Activated naive CD4-positive, alpha-beta T cell treated with anti-CD3 and anti-CD28 coated beads for 36 hours (primary cell): ENCODE measurements at regions of chr6 and their contacts with region 1.

Region 1: DNA sequence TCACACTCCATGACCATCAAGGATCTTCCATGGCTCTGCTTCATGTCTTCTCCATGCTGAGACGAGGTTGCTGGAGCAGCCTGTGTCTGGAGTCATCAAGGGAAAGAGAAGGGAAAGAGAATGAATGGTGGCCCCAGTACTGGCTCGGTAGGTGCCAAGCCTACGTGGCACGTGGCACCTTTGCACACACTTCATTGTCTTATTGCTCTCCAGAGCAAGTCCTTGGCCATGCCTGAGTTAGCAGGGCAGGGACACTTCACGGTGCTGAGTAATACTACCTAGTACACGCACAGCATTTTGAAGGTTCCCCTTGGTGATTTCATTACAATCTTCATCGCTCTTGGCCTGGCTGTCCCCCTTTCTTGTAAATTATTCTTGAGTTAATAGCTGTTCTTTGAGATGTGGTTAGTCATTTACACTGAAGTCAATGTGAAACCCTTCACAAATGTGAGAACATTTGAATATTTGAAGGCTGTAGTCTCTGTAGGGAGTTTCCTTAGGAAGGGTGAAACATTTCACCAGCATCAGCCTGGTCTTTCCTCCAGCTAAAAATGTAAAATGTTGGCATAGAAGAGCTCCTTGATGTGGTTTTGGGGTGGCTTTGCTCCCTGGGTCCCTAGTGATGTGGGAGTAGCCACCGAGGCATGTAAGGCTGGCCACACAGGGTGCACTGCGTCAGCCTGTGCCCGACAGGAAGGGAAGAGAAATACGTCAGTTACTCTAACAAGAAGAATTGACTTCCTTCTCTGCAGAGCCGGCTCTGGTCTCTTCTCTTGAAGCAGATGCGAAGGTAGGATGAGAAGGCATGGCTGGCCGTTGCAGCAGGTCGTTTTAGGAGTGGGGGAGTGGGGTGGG is at the start of gene SYTL3:
- DNase-seq: peak; percentile 95
- H3K4me3 Mint-ChIP-seq: peak within 1 kb of the TSS; percentile 76
- H3K27ac Mint-ChIP-seq: peak within 1 kb of the TSS; percentile 98
- H3K4me1 Mint-ChIP-seq: peaks cover 72% of the 10 kb centered on the region
- H3K27me3 Mint-ChIP-seq: no peaks in the 10 kb centered on the region
- total RNA-seq, gene SYTL3: 115 to 120 TPM

Region 2: GRCh38 chr6:157823528-157824370 is 825.8 kb before region 1 on chr6:
- CTCF ChIA-PET with region 1: no interaction called
- intact Hi-C with region 1: loop called (anchors 2 kb)
- DNase-seq: peak; percentile 96
- H3K4me3 Mint-ChIP-seq: peak overlapping the region; percentile 80
- H3K27ac Mint-ChIP-seq: peak overlapping the region; percentile 96
- H3K4me1 Mint-ChIP-seq: peaks cover 42% of the 10 kb centered on the region
- H3K27me3 Mint-ChIP-seq: peaks cover 4% of the 10 kb centered on the region

Region 3: DNA sequence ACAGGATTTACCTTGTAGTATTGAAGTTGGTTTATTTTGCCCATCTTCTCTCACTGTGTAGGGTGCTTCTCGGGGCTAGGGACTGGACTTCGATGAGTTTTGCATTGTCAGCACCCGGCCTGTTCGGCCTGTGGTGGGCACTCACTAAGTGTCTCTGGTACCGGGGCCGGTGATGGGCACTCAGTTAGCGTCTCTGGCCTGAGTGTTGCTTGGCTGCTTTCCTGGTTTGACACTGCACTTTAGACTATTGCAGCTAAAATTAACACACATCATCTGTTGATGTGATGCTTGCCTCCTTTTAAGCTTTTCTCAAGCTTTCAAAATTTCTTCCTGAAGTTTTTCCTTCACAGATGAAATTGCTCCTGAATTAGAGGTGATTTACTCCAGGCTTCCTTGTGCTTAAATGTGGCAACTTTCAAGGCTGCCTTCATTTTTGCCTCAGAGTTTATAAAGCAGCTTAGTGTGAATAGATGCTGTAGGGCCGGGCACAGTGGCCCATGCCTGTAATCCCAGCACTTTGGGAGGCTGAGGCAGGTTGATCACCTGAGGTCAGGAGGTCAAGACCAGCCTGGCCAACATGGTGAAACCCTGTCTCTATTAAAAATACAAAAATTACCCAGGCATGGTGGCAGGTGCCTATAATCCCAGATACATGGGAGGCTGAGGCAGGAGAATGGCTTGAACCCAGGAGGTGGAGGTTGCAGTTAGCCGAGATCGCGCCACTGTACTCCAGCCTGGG is 379.0 kb before region 1 on chr6:
- CTCF ChIA-PET with region 1: no interaction called
- intact Hi-C with region 1: loop called (anchors 2 kb)
- DNase-seq: peak; percentile 50
- H3K4me3 Mint-ChIP-seq: peak overlapping the region; percentile 32
- H3K27ac Mint-ChIP-seq: no peak overlapping the region
- H3K4me1 Mint-ChIP-seq: peaks cover 30% of the 10 kb centered on the region
- H3K27me3 Mint-ChIP-seq: no peaks in the 10 kb centered on the region

Region 4: DNA sequence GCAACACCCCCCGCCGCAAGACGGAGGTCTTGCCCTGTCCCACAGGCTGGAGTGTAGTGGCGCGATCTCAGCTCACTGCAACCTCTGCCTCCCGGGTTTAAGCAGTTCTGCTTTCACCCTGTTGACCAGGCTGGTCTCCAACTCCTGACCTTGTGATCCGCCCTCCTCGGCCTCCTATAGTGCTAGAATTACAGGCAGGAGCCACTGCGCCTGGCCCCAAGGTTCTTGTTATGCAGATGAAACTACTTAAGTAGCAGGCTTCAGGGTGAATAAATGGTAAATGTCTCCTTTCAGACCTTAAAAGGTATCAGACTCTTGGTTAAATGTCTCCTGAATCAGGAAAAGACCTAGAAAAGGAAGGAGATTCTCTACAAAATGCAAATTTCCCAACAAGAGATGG is 185.0 kb before region 1 on chr6:
- CTCF ChIA-PET with region 1: no interaction called
- intact Hi-C with region 1: no loop called
- DNase-seq: no peak
- H3K4me3 Mint-ChIP-seq: no peak overlapping the region
- H3K27ac Mint-ChIP-seq: no peak overlapping the region
- H3K4me1 Mint-ChIP-seq: peaks cover 3% of the 10 kb centered on the region
- H3K27me3 Mint-ChIP-seq: no peaks in the 10 kb centered on the region

Region 5: DNA sequence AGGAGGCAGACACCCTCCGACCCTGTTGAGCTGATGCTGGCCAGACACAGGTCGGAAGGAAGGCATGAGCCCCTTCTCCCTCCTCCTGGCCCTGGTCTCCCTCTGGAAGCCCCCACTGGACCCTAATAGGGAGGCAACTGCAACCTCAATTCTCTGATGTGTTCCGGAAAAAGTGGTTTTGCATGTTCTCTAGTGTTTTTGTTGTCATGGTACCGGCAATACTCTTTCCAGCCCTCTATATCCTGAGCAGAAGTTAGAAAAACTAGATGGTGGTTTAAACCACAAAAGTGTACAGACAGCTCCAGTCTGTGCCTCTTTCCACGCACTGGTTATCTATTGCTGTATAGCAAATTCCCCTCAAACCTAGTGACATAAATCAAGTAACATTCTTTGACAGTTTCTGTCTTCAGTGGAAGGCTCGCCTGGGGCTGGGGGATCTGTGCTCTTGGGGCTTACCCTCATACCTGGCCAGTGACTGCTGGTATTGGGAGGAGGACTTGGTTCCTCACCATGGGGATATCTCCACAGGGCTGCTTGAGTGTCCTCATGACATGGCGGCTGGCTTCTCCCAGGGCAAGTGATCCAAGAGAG is 37.4 kb after region 1 on chr6:
- CTCF ChIA-PET with region 1: interaction called, 13 read pairs
- intact Hi-C with region 1: loop called (anchors 1 kb)
- DNase-seq: peak; percentile 58
- H3K4me3 Mint-ChIP-seq: no peak overlapping the region
- H3K27ac Mint-ChIP-seq: peak overlapping the region; percentile 81
- H3K4me1 Mint-ChIP-seq: peaks cover 70% of the 10 kb centered on the region
- H3K27me3 Mint-ChIP-seq: no peaks in the 10 kb centered on the region

Region 6: GRCh38 chr6:158869826-158870648 is 220.5 kb after region 1 on chr6:
- CTCF ChIA-PET with region 1: no interaction called
- intact Hi-C with region 1: loop called (anchors 1 kb)
- DNase-seq: peak; percentile 96
- H3K4me3 Mint-ChIP-seq: peak overlapping the region; percentile 88
- H3K27ac Mint-ChIP-seq: peak overlapping the region; percentile 99
- H3K4me1 Mint-ChIP-seq: peaks cover 35% of the 10 kb centered on the region
- H3K27me3 Mint-ChIP-seq: no peaks in the 10 kb centered on the region

Region 7: GRCh38 chr6:159056003-159056402 is 406.5 kb after region 1 on chr6:
- CTCF ChIA-PET with region 1: no interaction called
- intact Hi-C with region 1: loop called (anchors 1 kb)
- DNase-seq: peak; percentile 41
- H3K4me3 Mint-ChIP-seq: peak overlapping the region; percentile 22
- H3K27ac Mint-ChIP-seq: peak overlapping the region; percentile 91
- H3K4me1 Mint-ChIP-seq: peaks cover 60% of the 10 kb centered on the region
- H3K27me3 Mint-ChIP-seq: no peaks in the 10 kb centered on the region